ENCODE measurements at regions of chr4 and their contacts with region 1.

Region 1: DNA sequence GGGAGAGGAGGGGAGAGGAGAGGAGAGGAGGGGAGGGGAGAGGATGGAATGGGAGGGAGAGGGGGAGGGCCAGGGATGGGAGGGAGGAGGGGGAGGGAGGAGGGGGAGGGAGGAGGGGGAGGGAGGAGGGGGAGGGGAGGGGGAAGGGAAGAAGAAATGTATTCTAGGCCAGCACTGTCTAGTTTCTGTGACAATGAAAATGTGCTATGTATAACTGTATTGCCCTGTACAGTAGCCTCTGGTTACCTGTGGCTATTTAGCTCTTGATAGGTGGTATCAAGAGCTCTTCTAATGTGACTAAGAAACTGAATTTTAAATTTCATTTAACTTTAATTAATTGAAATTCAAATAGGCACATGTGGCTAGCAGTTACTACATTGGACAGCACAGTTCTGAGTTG is 143.1 kb downstream of the BTC start:
- DNase-seq: no peak
- H3K4me3 ChIP-seq: no peak overlapping the region
- H3K27ac ChIP-seq: no peak overlapping the region
- H3K4me1 ChIP-seq: no peaks in the 10 kb centered on the region
- H3K27me3 ChIP-seq: no peaks in the 10 kb centered on the region
- CTCF ChIP-seq: no peak

Region 2: GRCh38 chr4:74682567-74683359 is 31.6 kb after region 1 on chr4:
- CTCF ChIA-PET with region 1: no interaction called
- POLR2A ChIA-PET with region 1: no interaction called
- intact Hi-C with region 1: loop called (anchors 1 kb)
- DNase-seq: peak; percentile 74 to 90
- H3K4me3 ChIP-seq: no peak overlapping the region
- H3K27ac ChIP-seq: peak overlapping the region; percentile 78
- H3K4me1 ChIP-seq: peaks cover 22% of the 10 kb centered on the region
- H3K27me3 ChIP-seq: no peaks in the 10 kb centered on the region
- CTCF ChIP-seq: no peak